AG04449 (cell line): ENCODE measurements at regions of chr1 and their contacts with region 1.

Region 1: GRCh38 chr1:86380257-86380861 is 15.8 kb downstream of the ODF2L start:
- DNase-seq: peak; percentile 45
- H3K4me3 ChIP-seq: no peak overlapping the region
- CTCF ChIP-seq: peak; percentile 52

Region 2: GRCh38 chr1:86395771-86396497 is 15.6 kb after region 1 on chr1 and contains the start of gene ODF2L:
- CTCF ChIA-PET with region 1: interaction called, 11 read pairs
- POLR2A ChIA-PET with region 1: no interaction called
- DNase-seq: peak; percentile 29
- H3K4me3 ChIP-seq: peak within 1 kb of the TSS; percentile 94
- CTCF ChIP-seq: no peak

Region 3: GRCh38 chr1:86507935-86508582 is 127.7 kb after region 1 on chr1:
- CTCF ChIA-PET with region 1: interaction called, 198 read pairs
- POLR2A ChIA-PET with region 1: no interaction called
- DNase-seq: no peak
- H3K4me3 ChIP-seq: no peak overlapping the region
- CTCF ChIP-seq: peak; percentile 33

Region 4: GRCh38 chr1:86687595-86687994 is 307.2 kb after region 1 on chr1:
- CTCF ChIA-PET with region 1: interaction called, 12 read pairs
- POLR2A ChIA-PET with region 1: no interaction called
- DNase-seq: no peak
- H3K4me3 ChIP-seq: no peak overlapping the region
- CTCF ChIP-seq: no peak

Region 5: DNA sequence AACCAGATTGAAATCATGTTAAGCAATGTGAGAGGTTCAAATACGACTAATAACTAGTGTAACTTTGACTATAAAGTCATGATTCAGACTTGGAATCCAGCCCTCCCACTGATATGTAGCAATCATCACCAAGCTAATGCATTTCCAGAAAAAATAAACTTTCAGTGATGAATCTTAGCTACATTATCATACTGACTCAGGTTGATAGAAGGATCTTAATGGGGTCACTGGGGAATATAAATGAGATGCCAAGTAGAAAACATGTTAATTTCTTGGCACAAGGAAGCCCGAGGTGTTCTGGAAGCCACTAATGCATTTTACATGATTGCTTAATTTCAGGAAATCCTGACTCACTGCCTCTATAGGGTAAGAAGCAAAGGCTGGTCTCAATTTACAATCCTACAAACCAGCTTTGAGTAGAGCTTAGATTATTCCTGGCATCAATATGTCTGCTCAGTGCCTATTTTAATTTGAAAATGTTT is 465.8 kb after region 1 on chr1:
- CTCF ChIA-PET with region 1: no interaction called
- POLR2A ChIA-PET with region 1: no interaction called
- DNase-seq: peak; percentile 80
- H3K4me3 ChIP-seq: no peak overlapping the region
- CTCF ChIP-seq: no peak